Esophagus muscularis mucosa (tissue), 4 donors: ENCODE measurements at regions of chr2 and their contacts with region 1.

Region 1: GRCh38 chr2:149017116-149017985 is 21.1 kb upstream of the LYPD6B start:
- DNase-seq: no peak
- H3K4me3 ChIP-seq: no peak overlapping the region
- H3K27ac ChIP-seq: no peak overlapping the region
- H3K4me1 ChIP-seq: peaks cover 0 to 7% (median 6%) of the 10 kb centered on the region in 4 donors
- H3K27me3 ChIP-seq: no peaks in the 10 kb centered on the region
- CTCF ChIP-seq: peak; percentile 73 to 88 (median 84)
- EP300 ChIP-seq: no peak
- POLR2A ChIP-seq: no peak

Region 2: GRCh38 chr2:149064856-149065630 is 47.7 kb after region 1 on chr2:
- intact Hi-C with region 1: no loop called
- DNase-seq: peak; percentile 66
- H3K4me3 ChIP-seq: no peak overlapping the region
- H3K27ac ChIP-seq: no peak overlapping the region
- H3K4me1 ChIP-seq: peaks cover 4 to 24% (median 18%) of the 10 kb centered on the region in 4 donors
- H3K27me3 ChIP-seq: no peaks in the 10 kb centered on the region
- CTCF ChIP-seq: no peak
- EP300 ChIP-seq: no peak
- POLR2A ChIP-seq: no peak

Region 3: DNA sequence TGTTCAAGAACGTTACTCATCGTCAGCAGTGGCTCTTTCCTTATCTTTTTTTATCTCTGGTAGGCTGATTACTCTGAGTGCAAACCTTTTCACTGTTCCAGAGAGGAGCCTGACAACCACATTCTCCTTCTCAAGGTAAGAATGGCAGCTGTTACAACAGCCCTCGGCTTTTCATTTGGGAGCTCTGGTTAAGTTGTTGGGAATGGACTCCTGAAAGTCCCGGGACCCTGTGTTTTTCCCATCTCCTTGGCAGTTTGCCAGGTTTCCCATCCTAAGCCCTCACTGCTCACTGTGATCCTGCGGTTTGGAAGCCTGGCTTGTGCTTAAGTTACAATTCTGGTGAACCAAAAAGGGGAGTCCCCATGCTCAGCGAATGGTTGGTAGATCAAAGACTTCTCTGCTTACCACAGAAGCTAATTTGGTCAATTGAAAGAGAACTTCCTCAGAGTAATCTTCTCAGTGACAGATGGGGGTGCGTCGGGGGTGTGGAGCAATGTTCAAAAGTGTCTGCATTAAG is 143.4 kb after region 1 on chr2:
- intact Hi-C with region 1: no loop called
- DNase-seq: peak; percentile 84
- H3K4me3 ChIP-seq: no peak overlapping the region
- H3K27ac ChIP-seq: no peak overlapping the region
- H3K4me1 ChIP-seq: no peaks in the 10 kb centered on the region
- H3K27me3 ChIP-seq: no peaks in the 10 kb centered on the region
- CTCF ChIP-seq: no peak
- EP300 ChIP-seq: no peak
- POLR2A ChIP-seq: no peak

Region 4: GRCh38 chr2:149313512-149313972 is 296.2 kb after region 1 on chr2:
- intact Hi-C with region 1: loop called (anchors 10 kb)
- DNase-seq: no peak
- H3K4me3 ChIP-seq: no peak overlapping the region
- H3K27ac ChIP-seq: no peak overlapping the region
- H3K4me1 ChIP-seq: peaks cover 0 to 10% (median 4%) of the 10 kb centered on the region in 4 donors
- H3K27me3 ChIP-seq: peaks cover 0 to 22% (median 0%) of the 10 kb centered on the region in 4 donors
- CTCF ChIP-seq: peak; percentile 45 to 75 (median 57)
- EP300 ChIP-seq: no peak
- POLR2A ChIP-seq: no peak

Region 5: DNA sequence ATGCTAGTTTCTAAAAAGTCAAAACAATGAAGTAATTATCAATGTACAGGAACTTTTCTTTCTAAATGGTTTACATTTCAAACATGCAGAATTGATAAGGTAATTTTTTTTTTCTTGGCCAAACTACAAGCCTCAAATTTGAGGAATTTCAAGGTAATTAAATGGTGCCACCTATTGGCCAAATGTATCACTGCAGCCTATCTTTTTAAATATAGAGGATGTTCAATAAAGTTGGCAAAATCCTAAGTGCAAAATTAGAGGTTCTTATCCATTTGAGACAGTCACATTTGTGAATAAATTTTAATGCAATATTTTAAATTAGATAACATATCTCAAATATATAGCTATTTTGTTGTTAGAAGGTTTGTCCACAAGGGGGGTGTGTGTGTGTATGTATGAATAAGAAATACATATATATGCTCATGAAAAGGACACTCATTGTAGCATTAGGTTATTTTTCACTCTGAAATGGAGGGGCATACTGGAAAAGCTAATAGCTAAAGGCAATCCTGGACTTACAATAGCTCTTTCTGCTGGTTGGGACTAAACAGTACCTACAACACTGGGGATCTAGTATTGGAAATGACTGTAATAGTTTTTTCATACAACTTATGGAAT is 544.1 kb after region 1 on chr2:
- intact Hi-C with region 1: loop called (anchors 1 kb)
- DNase-seq: no peak
- H3K4me3 ChIP-seq: no peak overlapping the region
- H3K27ac ChIP-seq: no peak overlapping the region
- H3K4me1 ChIP-seq: peaks cover 0 to 6% (median 0%) of the 10 kb centered on the region in 4 donors
- H3K27me3 ChIP-seq: peaks cover 0 to 3% (median 0%) of the 10 kb centered on the region in 4 donors
- CTCF ChIP-seq: peak; percentile 84 to 92 (median 91)
- EP300 ChIP-seq: no peak
- POLR2A ChIP-seq: no peak